Dendritic cell treated with granulocyte-macrophage colony-stimulating factor and Interleukin-4, amounts not matched to agents 40 ng/mL and 50 ng/mL, for 4 days (primary cell): ENCODE measurements at regions of chr3 and their contacts with region 1.

Region 1: GRCh38 chr3:32733631-32734229 is 48.7 kb downstream of the CNOT10 start:
- H3K4me3 Mint-ChIP-seq: no peak overlapping the region
- H3K27ac Mint-ChIP-seq: no peak overlapping the region
- H3K4me1 Mint-ChIP-seq: no peaks in the 10 kb centered on the region
- H3K27me3 Mint-ChIP-seq: no peaks in the 10 kb centered on the region

Region 2: GRCh38 chr3:32641356-32641755 is 92.4 kb before region 1 on chr3:
- intact Hi-C with region 1: no loop called
- H3K4me3 Mint-ChIP-seq: no peak overlapping the region
- H3K27ac Mint-ChIP-seq: no peak overlapping the region
- H3K4me1 Mint-ChIP-seq: no peaks in the 10 kb centered on the region
- H3K27me3 Mint-ChIP-seq: peaks cover 5% of the 10 kb centered on the region

Region 3: DNA sequence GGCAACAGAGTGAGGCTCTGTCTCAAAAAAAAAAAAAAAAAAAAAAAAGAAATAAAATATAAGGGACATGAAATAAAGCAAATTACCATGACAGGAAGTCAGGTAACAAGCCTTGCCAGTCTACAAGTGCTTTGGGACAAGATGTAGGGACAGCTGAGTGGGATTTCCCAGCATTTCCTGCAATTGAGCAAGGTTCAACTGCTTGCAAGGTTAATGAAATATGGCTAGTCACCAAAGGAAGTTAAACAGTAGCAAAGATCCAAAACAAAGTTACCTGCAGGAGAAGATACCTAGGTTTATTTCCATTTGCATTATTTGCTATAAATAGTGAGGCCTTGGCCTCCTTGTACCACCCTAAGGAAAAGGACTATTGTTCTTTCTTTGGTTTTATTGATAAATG is 71.1 kb before region 1 on chr3:
- intact Hi-C with region 1: no loop called
- H3K4me3 Mint-ChIP-seq: no peak overlapping the region
- H3K27ac Mint-ChIP-seq: no peak overlapping the region
- H3K4me1 Mint-ChIP-seq: no peaks in the 10 kb centered on the region
- H3K27me3 Mint-ChIP-seq: peaks cover 3% of the 10 kb centered on the region

Region 4: DNA sequence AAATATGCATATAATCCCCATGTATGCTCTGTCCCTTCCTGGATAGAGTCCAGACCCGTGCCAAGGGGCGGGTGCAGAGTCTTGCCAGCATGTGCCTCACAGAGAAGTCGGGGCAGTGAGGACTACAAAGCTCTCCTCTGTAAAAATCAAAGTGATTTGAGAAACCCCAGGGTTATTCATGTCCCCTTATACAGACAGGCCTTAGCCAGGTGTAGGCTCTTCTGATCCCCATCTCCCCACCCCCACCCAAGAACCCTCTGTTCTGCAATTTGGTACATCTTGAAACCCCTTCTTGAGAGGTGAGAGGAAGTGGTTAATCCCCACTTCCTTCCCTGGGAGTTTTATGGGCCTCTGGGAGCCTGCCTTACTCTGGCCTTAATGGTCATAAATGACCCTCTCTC is 108.8 kb after region 1 on chr3:
- intact Hi-C with region 1: no loop called
- H3K4me3 Mint-ChIP-seq: no peak overlapping the region
- H3K27ac Mint-ChIP-seq: no peak overlapping the region
- H3K4me1 Mint-ChIP-seq: peaks cover 21% of the 10 kb centered on the region
- H3K27me3 Mint-ChIP-seq: no peaks in the 10 kb centered on the region

Region 5: GRCh38 chr3:32934150-32934742 is 200.5 kb after region 1 on chr3:
- intact Hi-C with region 1: loop called (anchors 1 kb)
- H3K4me3 Mint-ChIP-seq: no peak overlapping the region
- H3K27ac Mint-ChIP-seq: no peak overlapping the region
- H3K4me1 Mint-ChIP-seq: no peaks in the 10 kb centered on the region
- H3K27me3 Mint-ChIP-seq: no peaks in the 10 kb centered on the region

Region 6: DNA sequence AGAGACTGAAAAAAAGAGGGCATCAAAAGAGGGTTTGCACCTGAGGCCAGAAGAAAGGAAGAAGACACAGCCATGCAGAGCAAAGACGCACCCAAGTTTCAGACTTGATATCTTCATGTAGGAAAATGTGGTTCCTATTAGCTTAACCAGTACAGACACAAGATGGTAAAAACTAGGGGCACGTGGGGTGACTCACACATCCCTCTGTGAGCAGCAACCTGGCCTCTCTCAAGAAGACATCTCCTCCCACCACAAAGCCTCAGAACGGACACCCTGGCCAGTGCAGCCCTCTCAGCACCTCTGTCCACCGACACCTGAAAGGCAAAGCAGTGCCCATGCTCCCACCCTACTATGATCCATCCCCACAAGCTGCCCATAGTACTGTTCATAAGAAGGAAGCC is 329.9 kb after region 1 on chr3:
- intact Hi-C with region 1: loop called (anchors 10 kb)
- H3K4me3 Mint-ChIP-seq: no peak overlapping the region
- H3K27ac Mint-ChIP-seq: peak overlapping the region; percentile 45
- H3K4me1 Mint-ChIP-seq: peaks cover 43% of the 10 kb centered on the region
- H3K27me3 Mint-ChIP-seq: no peaks in the 10 kb centered on the region